ENCODE measurements at regions of chr2 and their contacts with region 1.

Region 1: GRCh38 chr2:32277674-32278482 is at the start of gene YIPF4:
- DNase-seq: peak; percentile 83
- H3K4me3 ChIP-seq: peak within 1 kb of the TSS; percentile 80 to 97 (median 84)
- H3K27ac ChIP-seq: peak within 1 kb of the TSS; percentile 69
- H3K4me1 ChIP-seq: peaks cover 6% of the 10 kb centered on the region
- H3K27me3 ChIP-seq: no peaks in the 10 kb centered on the region
- CTCF ChIP-seq: no peak
- total RNA-seq, gene YIPF4: 17.8 to 45.8 TPM

Region 2: DNA sequence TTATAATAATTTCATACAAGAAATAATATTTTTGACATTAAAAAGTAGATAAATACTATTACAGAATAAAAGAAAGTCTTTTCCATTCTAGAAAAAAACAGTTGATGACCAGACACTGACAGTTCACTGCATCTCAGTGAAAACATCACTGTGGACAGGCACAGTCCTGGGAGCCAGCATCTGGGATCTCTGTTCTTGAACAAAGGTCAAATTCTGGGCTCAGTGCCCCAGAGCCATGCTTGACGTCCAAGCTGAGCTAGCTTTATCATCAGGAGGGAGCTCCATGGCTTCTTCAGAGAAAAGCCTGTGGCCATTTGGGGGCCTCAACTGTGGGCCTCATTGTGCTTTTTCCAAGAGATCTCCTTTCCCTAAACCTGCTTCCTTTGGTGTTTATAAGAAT is 611.0 kb before region 1 on chr2:
- CTCF ChIA-PET with region 1: no interaction called
- dilution Hi-C with region 1: no loop called
- in situ Hi-C with region 1: no loop called
- intact Hi-C with region 1: no loop called
- DNase-seq: no peak
- H3K4me3 ChIP-seq: no peak overlapping the region
- H3K27ac ChIP-seq: no peak overlapping the region
- H3K4me1 ChIP-seq: no peaks in the 10 kb centered on the region
- H3K27me3 ChIP-seq: no peaks in the 10 kb centered on the region
- CTCF ChIP-seq: no peak

Region 3: GRCh38 chr2:32119161-32119560 is 158.7 kb before region 1 on chr2:
- CTCF ChIA-PET with region 1: no interaction called
- dilution Hi-C with region 1: no loop called
- in situ Hi-C with region 1: no loop called
- intact Hi-C with region 1: no loop called
- DNase-seq: peak; percentile 86
- H3K4me3 ChIP-seq: no peak overlapping the region
- H3K27ac ChIP-seq: no peak overlapping the region
- H3K4me1 ChIP-seq: peaks cover 4% of the 10 kb centered on the region
- H3K27me3 ChIP-seq: no peaks in the 10 kb centered on the region
- CTCF ChIP-seq: no peak

Region 4: GRCh38 chr2:32356735-32357644 is 79.1 kb after region 1 on chr2 and contains the start of gene BIRC6:
- CTCF ChIA-PET with region 1: no interaction called
- dilution Hi-C with region 1: no loop called
- in situ Hi-C with region 1: no loop called
- intact Hi-C with region 1: loop called (anchors 5 kb)
- DNase-seq: peak; percentile 97
- H3K4me3 ChIP-seq: peak within 1 kb of the TSS; percentile 99 to 100 (median 100)
- H3K27ac ChIP-seq: peak within 1 kb of the TSS; percentile 83
- H3K4me1 ChIP-seq: peaks cover 9% of the 10 kb centered on the region
- H3K27me3 ChIP-seq: no peaks in the 10 kb centered on the region
- CTCF ChIP-seq: no peak
- total RNA-seq, gene BIRC6: 82.0 to 169 TPM